Caco-2 (cell line): ENCODE measurements at regions of chr4 and their contacts with region 1.

Region 1: DNA sequence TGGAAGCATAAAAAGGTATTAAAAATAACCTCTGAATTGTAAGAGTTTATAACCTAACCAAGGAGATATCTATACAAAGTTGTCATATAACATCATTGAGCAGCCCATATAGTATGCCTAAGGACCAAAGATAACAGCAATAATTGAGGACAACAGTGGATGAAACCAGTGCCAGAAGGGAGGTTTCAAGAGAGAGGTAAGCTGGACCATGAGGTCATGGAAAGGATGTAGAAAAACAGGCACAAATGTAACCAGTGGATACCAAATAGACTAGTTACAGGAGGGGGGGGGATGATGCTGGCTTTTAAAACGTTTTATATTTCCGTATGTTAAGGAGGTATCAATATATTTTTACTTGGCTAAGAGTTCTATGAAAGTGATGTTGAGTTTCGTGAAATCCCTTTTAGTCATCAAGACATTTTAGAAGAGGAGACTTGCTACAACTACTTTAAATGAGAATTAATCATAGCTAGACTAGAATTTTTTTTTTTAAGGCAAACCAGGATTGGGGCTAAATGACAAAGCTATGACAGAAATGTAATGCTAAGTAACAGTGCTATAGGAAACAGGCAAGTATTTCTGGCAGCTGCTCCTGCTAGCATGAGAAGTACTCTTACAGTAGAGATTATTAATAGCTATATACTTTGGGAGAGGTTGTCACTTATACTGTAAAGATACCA is 161.1 kb downstream of the FBXW7 start:
- DNase-seq: no peak
- H3K4me3 ChIP-seq: no peak overlapping the region
- H3K4me3 Mint-ChIP-seq: no peak overlapping the region
- H3K27ac Mint-ChIP-seq: no peak overlapping the region
- H3K4me1 ChIP-seq: no peaks in the 10 kb centered on the region
- H3K4me1 Mint-ChIP-seq: no peaks in the 10 kb centered on the region
- H3K27me3 ChIP-seq: no peaks in the 10 kb centered on the region
- H3K27me3 Mint-ChIP-seq: no peaks in the 10 kb centered on the region
- CTCF ChIP-seq: no peak

Region 2: DNA sequence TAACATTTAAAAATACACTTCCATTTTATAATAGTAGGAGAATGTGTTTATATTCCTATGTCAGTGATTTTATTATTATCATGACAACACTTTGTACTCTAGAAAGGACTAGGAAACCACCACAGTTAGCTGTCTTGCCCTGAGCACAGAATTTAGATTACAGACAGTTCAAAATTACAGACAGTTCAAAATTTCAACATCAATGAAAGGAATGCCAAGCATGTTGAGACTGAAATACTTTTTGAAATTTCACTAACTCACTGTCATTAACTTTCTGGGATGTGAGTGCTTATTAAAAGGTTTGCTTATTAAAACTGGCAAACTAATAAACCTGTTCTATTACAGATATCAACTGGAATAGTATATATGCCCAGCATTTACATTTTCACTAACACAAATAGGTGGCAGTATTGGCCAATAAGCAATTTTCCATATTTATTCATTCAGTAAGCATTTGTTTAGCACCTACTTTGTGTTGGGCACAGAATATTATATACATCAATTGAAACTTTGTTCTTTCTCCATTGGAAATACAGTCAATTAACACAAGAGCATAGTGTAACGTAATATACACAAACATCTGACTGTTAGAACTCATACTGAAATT is 18.2 kb before region 1 on chr4:
- CTCF ChIA-PET with region 1: no interaction called
- POLR2A ChIA-PET with region 1: no interaction called
- intact Hi-C with region 1: loop called (anchors 1 kb)
- DNase-seq: no peak
- H3K4me3 ChIP-seq: no peak overlapping the region
- H3K4me3 Mint-ChIP-seq: no peak overlapping the region
- H3K27ac Mint-ChIP-seq: no peak overlapping the region
- H3K4me1 ChIP-seq: peaks cover 13% of the 10 kb centered on the region
- H3K4me1 Mint-ChIP-seq: peaks cover 15% of the 10 kb centered on the region
- H3K27me3 ChIP-seq: no peaks in the 10 kb centered on the region
- H3K27me3 Mint-ChIP-seq: no peaks in the 10 kb centered on the region
- CTCF ChIP-seq: no peak